ENCODE measurements at regions of chr15 and their contacts with region 1.

Region 1: GRCh38 chr15:31488426-31489204 is 162.0 kb downstream of the KLF13 start:
- DNase-seq: no peak
- H3K4me3 ChIP-seq: no peak overlapping the region
- H3K27me3 ChIP-seq: peaks cover 3% of the 10 kb centered on the region; the same call in 1 of the 2 replicates
- CTCF ChIP-seq: peak; percentile 90

Region 2: GRCh38 chr15:31200735-31201151 is 287.9 kb before region 1 on chr15:
- CTCF ChIA-PET with region 1: interaction called, 107 read pairs
- POLR2A ChIA-PET with region 1: no interaction called
- DNase-seq: no peak
- H3K4me3 ChIP-seq: no peak overlapping the region
- H3K27me3 ChIP-seq: peaks cover 10% of the 10 kb centered on the region
- CTCF ChIP-seq: peak; percentile 70

Region 3: DNA sequence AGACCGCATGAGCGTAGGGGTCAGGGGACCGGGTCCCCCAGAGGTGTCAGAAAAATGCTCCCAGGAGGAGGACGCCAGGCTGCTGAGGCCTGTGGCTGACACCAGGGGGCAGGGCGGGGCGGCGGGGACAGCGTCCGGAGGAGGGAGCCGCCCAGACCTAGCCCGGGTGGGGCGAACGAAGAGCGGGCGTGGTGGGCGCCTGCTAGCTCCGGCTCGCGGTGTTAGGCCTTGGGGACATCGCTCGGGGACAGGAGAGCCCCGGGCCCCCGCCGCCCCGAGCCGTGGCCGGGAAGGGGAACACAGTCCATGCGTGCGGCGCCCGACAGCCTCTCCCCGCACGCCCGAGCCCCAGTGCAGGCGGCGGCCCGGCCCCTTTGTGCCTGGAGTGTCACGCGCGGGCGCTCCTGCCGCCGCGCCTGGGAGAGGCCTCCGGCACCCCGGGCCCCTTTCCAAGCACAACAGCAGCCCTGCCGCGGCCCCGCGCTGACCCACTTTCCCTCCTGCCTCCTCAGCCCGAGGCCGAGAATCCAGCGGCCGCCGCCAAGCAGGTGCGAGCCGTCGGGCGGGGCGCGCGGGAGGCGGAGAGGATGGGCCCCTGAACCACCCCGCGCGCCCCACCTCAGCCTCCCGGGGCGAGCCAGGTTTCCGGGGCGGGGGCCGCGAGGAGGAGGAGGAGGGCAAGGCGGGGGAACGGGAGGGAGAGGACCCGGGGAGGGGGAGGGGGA is 273.0 kb before region 1 on chr15:
- CTCF ChIA-PET with region 1: interaction called, 51 read pairs
- POLR2A ChIA-PET with region 1: no interaction called
- DNase-seq: no peak
- H3K4me3 ChIP-seq: peak overlapping the region; percentile 44
- H3K27me3 ChIP-seq: peaks cover 3% of the 10 kb centered on the region
- CTCF ChIP-seq: peak; percentile 86

Region 4: DNA sequence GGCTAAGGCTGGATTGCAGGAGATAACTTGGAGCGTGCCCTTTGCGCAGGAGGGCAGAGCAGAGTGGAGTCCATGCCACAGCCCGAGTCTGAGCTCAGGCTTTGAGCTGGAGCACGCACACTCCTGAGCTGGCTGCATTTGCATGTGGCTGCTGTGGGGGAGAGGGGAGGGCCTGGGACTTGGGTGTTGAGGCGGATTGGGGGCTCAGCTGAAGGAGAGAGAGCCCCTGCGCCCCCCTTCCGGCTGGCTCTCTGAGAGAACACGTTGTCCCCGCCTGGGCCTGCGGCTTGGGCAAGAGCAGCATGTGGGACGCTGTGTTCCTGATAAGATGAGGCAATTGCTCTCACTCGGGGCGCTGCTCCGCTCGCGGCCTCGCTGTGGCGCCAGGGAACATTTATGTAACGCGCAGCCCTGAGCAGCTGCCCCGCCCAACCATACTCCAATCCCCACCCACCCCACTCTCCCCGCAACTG is 122.9 kb before region 1 on chr15:
- CTCF ChIA-PET with region 1: interaction called, 62 read pairs
- POLR2A ChIA-PET with region 1: no interaction called
- DNase-seq: peak; percentile 37
- H3K4me3 ChIP-seq: no peak overlapping the region
- H3K27me3 ChIP-seq: no peaks in the 10 kb centered on the region
- CTCF ChIP-seq: peak; percentile 62

Region 5: GRCh38 chr15:31458591-31459399 is 29.8 kb before region 1 on chr15:
- CTCF ChIA-PET with region 1: interaction called, 38 read pairs
- POLR2A ChIA-PET with region 1: no interaction called
- DNase-seq: no peak
- H3K4me3 ChIP-seq: no peak overlapping the region
- H3K27me3 ChIP-seq: no peaks in the 10 kb centered on the region
- CTCF ChIP-seq: no peak

Region 6: GRCh38 chr15:31499953-31500765 is 11.5 kb after region 1 on chr15:
- CTCF ChIA-PET with region 1: interaction called, 45 read pairs
- POLR2A ChIA-PET with region 1: no interaction called
- DNase-seq: no peak
- H3K4me3 ChIP-seq: no peak overlapping the region
- H3K27me3 ChIP-seq: no peaks in the 10 kb centered on the region
- CTCF ChIP-seq: no peak

Region 7: GRCh38 chr15:31782016-31782770 is 293.6 kb after region 1 on chr15:
- CTCF ChIA-PET with region 1: no interaction called
- POLR2A ChIA-PET with region 1: no interaction called
- DNase-seq: no peak
- H3K4me3 ChIP-seq: no peak overlapping the region
- H3K27me3 ChIP-seq: no peaks in the 10 kb centered on the region
- CTCF ChIP-seq: no peak